Gastrocnemius medialis (tissue), 4 donors: ENCODE measurements at regions of chr2 and their contacts with region 1.

Region 1: GRCh38 chr2:176638167-176639015 is 369.1 kb downstream of the MTX2 start:
- DNase-seq: peak; percentile 26 to 37
- ATAC-seq: peak; percentile 81 to 88
- H3K4me3 ChIP-seq: peak overlapping the region; percentile 63 to 84 (median 68)
- H3K27ac ChIP-seq: peak overlapping the region in 3 of 4 donors; percentile 50 to 70 (median 56)
- H3K4me1 ChIP-seq: peaks cover 0 to 5% of the 10 kb centered on the region in 2 donors
- H3K27me3 ChIP-seq: peaks cover 9 to 31% (median 23%) of the 10 kb centered on the region in 3 donors
- CTCF ChIP-seq: peak; percentile 59 to 81 (median 74)
- POLR2A ChIP-seq: no peak

Region 2: DNA sequence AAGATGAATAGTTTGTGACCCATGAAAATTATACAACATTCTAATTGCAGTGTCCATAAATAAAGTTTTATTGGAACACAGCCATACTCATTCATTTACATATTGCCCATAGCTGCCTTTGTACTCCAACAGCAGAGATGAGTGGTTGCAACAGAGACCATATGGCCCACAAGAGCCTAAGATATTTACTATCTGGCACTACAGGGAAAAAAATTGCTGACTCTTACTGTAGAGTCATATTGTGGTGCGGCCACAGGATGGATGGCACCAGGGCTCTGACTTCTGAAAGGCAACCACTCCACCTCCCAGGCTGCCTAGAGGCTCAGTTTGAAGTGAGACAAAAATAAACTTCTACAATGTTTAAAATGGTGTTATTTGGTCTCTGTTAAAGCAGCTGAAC is 1052.9 kb before region 1 on chr2:
- in situ Hi-C with region 1: no loop called
- intact Hi-C with region 1: no loop called
- DNase-seq: no peak
- ATAC-seq: no peak
- H3K4me3 ChIP-seq: no peak overlapping the region
- H3K27ac ChIP-seq: no peak overlapping the region
- H3K4me1 ChIP-seq: no peaks in the 10 kb centered on the region
- H3K27me3 ChIP-seq: no peaks in the 10 kb centered on the region
- CTCF ChIP-seq: no peak
- POLR2A ChIP-seq: no peak

Region 3: DNA sequence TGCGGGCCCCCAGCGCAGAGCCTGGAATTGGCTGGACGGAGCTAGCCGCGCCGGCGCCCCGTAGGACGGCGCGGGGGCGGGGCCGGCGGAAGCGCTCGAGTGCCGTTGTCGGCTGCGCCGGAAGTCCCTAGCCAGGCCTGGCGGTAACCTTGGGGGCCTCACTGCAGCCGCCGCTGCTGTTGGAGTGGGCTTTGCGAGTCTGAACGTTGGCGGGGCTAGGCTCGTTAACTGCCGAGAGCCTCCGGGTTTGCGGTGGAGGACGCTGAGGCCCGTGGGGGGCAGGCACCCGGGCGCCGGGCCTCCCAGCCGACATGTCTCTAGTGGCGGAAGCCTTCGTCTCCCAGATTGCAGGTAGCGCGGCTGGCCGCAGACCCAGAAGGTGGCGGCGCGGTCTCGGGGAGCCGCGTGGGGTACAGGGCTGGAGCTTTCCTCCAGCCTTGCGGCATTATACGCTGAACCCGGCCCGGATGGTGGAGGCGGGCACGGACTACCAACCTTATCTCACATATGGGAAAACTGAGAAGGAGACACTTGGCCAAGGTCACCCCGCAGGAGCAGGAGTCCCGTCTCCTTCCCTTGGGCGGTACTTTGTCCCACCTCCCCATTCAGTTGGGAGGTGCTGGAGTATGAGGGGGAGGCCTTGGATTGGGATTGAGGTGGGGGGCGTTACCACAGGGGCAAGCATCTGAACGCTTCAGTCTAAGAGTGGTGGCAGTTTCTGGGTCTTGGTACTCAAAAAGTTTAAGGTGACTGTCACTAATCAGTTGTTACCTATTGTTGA is 368.9 kb before region 1 on chr2 and contains the start of gene MTX2:
- in situ Hi-C with region 1: no loop called
- intact Hi-C with region 1: loop called (anchors 10 kb)
- DNase-seq: peak; percentile 48 to 61
- ATAC-seq: peak; percentile 93 to 95
- H3K4me3 ChIP-seq: peak within 1 kb of the TSS; percentile 84 to 94 (median 89)
- H3K27ac ChIP-seq: peak within 1 kb of the TSS; percentile 85 to 92 (median 89)
- H3K4me1 ChIP-seq: peaks cover 13 to 29% of the 10 kb centered on the region in 2 donors
- H3K27me3 ChIP-seq: no peaks in the 10 kb centered on the region
- CTCF ChIP-seq: peak in 3 of 5 experiments; percentile 19 to 46 (median 29)
- POLR2A ChIP-seq: peak; percentile 59 to 61
- total RNA-seq, gene MTX2: 35.8 to 43.3 (median 39.1) TPM

Region 4: GRCh38 chr2:176328149-176328548 is 310.2 kb before region 1 on chr2:
- in situ Hi-C with region 1: no loop called
- intact Hi-C with region 1: no loop called
- DNase-seq: no peak
- ATAC-seq: no peak
- H3K4me3 ChIP-seq: no peak overlapping the region
- H3K27ac ChIP-seq: no peak overlapping the region
- H3K4me1 ChIP-seq: no peaks in the 10 kb centered on the region
- H3K27me3 ChIP-seq: no peaks in the 10 kb centered on the region
- CTCF ChIP-seq: no peak
- POLR2A ChIP-seq: no peak

Region 5: DNA sequence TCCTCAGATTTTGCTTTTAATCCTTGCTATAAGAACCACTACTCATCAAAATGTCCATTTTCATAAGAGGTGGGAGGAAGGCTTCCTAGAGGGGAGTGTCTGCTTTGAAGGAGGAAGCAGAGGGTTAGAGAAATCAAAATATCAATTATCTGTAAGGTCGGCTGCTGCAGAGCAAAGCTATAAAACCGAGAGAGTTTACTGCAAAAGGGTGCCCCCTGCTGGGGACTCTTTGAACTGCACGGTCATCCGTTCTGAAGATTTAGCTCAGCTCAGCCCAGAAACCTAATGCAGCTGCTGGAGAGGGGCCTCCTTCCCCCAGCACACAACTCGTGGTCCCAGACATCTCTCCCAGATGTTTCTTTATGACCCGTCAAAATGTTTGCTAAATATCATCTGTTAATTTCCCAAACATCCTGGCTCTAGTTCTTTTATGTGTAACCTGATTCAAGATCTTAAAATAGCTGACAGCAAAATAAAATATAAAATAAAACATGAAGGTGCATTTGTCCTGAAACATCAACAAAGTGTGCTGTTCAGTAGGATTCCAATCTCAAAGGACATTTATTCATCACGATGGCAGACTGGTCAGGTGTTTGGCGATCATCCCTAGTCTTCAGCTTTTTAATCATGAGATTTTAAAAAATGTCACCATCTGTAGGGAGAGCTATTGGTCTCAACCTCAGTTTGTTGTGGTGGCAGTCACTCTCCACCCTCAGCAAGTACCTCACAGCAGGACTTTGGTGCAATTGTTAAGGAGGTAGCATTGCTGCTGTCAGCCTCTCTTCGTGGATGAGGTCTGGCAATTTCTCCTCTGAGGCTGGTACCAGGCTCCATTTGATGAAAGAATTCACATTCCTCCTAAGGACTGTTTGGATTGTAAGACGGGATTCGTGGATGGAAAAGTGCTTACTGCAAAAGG is 183.2 kb before region 1 on chr2:
- in situ Hi-C with region 1: loop called in 2 of 4 experiments (anchors 10 to 25 kb)
- intact Hi-C with region 1: loop called (anchors 5 kb)
- DNase-seq: peak; percentile 42 to 59
- ATAC-seq: peak; percentile 10 to 72
- H3K4me3 ChIP-seq: no peak overlapping the region
- H3K27ac ChIP-seq: peak overlapping the region; percentile 24 to 59 (median 45)
- H3K4me1 ChIP-seq: peaks cover 0 to 5% of the 10 kb centered on the region in 2 donors
- H3K27me3 ChIP-seq: no peaks in the 10 kb centered on the region
- CTCF ChIP-seq: peak; percentile 66 to 95 (median 82)
- POLR2A ChIP-seq: no peak